Activated CD4-positive, alpha-beta T cell treated with anti-CD3 and anti-CD28 coated beads for 36 hours (primary cell): ENCODE measurements at regions of chr11 and their contacts with region 1.

Region 1: GRCh38 chr11:57800444-57801182 is 39.0 kb downstream of the CTNND1 start:
- DNase-seq: no peak
- ATAC-seq: peak; percentile 91
- H3K4me3 Mint-ChIP-seq: no peak overlapping the region
- H3K27ac Mint-ChIP-seq: peak overlapping the region; percentile 59
- H3K4me1 Mint-ChIP-seq: peaks cover 27% of the 10 kb centered on the region
- H3K27me3 Mint-ChIP-seq: no peaks in the 10 kb centered on the region

Region 2: DNA sequence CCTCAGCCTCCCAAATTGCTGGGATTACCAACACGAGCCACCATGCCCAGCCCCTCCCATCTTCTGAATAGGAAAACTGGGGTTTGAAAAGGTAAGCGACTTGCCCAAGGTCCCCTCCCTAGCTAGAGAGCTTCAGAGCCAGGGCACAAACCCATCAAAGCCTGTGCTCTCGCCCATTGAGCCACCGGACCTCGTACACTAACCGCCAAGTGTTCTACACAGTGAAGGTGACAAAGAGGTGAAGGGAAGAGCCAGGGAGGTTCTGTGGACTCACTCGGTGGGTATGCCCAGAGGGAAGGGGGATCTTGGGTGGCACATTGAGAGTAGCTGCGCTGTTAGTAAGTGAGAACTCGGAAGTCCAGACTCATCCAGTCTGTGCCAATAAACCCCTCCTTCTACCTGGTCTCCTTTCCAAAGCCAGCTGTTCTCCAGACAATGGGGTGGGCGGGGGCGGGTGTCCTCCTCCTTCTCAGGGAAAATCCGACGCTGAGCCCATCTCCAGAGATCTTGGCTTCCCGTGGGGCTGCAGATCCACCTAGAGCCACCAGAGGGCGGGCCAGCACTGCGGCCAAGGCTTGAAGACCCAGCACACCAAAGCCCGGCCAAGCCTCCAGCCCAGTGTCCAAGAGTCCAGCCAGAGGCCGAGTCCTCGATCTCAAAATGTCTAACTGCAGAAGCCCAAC is 343.5 kb before region 1 on chr11:
- CTCF ChIA-PET with region 1: interaction called, 3 read pairs
- POLR2A ChIA-PET with region 1: interaction called, 4 read pairs
- intact Hi-C with region 1: loop called in 1 of 2 experiments (anchors 1 kb)
- DNase-seq: peak; percentile 87
- ATAC-seq: peak; percentile 36
- H3K4me3 Mint-ChIP-seq: peak overlapping the region; percentile 15
- H3K27ac Mint-ChIP-seq: no peak overlapping the region
- H3K4me1 Mint-ChIP-seq: peaks cover 27% of the 10 kb centered on the region
- H3K27me3 Mint-ChIP-seq: peaks cover 25% of the 10 kb centered on the region

Region 3: GRCh38 chr11:57667736-57668435 is 132.7 kb before region 1 on chr11 and contains the start of gene ZDHHC5:
- CTCF ChIA-PET with region 1: interaction called, 9 read pairs
- POLR2A ChIA-PET with region 1: no interaction called
- intact Hi-C with region 1: loop called in 1 of 2 experiments (anchors 2 kb)
- DNase-seq: peak; percentile 100
- ATAC-seq: peak; percentile 88
- H3K4me3 Mint-ChIP-seq: peak within 1 kb of the TSS; percentile 99
- H3K27ac Mint-ChIP-seq: peak within 1 kb of the TSS; percentile 99
- H3K4me1 Mint-ChIP-seq: peaks cover 37% of the 10 kb centered on the region
- H3K27me3 Mint-ChIP-seq: no peaks in the 10 kb centered on the region
- total RNA-seq, gene ZDHHC5: 46.2 to 60.0 TPM

Region 4: GRCh38 chr11:57741132-57742086 is 59.2 kb before region 1 on chr11 and contains the start of gene SELENOH:
- CTCF ChIA-PET with region 1: interaction called, 45 read pairs
- POLR2A ChIA-PET with region 1: interaction called, 15 read pairs
- intact Hi-C with region 1: loop called (anchors 1 kb)
- DNase-seq: peak; percentile 98
- ATAC-seq: peak; percentile 94
- H3K4me3 Mint-ChIP-seq: peak within 1 kb of the TSS; percentile 98
- H3K27ac Mint-ChIP-seq: peak within 1 kb of the TSS; percentile 100
- H3K4me1 Mint-ChIP-seq: peaks cover 28% of the 10 kb centered on the region
- H3K27me3 Mint-ChIP-seq: no peaks in the 10 kb centered on the region
- total RNA-seq, gene SELENOH: 117 to 244 TPM

Region 5: GRCh38 chr11:57761301-57762234 is 39.0 kb before region 1 on chr11 and contains the start of gene CTNND1:
- CTCF ChIA-PET with region 1: interaction called, 40 read pairs
- POLR2A ChIA-PET with region 1: interaction called, 3 read pairs
- intact Hi-C with region 1: no loop called
- DNase-seq: peak; percentile 30
- ATAC-seq: peak; percentile 59
- H3K4me3 Mint-ChIP-seq: peak within 1 kb of the TSS; percentile 69
- H3K27ac Mint-ChIP-seq: peak within 1 kb of the TSS; percentile 32
- H3K4me1 Mint-ChIP-seq: peaks cover 37% of the 10 kb centered on the region
- H3K27me3 Mint-ChIP-seq: no peaks in the 10 kb centered on the region
- total RNA-seq, gene CTNND1: 6.7 to 7.4 TPM

Region 6: DNA sequence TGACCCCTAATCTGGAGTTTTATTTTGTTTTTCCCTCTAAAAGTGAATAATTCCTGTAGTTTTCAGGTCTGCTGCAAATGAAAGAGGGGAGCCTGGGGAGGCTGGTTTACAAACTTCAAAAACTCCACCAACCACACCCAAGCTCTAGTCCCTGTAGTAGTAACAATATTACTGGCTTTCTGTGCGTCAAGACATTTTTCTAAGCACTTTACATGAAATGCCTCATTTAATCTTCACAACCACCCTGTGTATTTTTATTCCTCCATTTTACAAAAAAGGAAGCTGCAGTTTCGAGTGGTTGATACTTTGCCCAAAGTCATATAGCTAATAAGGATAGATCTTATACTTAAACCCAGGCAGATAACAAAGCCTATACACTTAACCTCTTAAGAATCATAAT is 15.5 kb before region 1 on chr11:
- CTCF ChIA-PET with region 1: interaction called, 14 read pairs
- POLR2A ChIA-PET with region 1: no interaction called
- intact Hi-C with region 1: no loop called
- DNase-seq: no peak
- ATAC-seq: no peak
- H3K4me3 Mint-ChIP-seq: no peak overlapping the region
- H3K27ac Mint-ChIP-seq: no peak overlapping the region
- H3K4me1 Mint-ChIP-seq: peaks cover 7% of the 10 kb centered on the region
- H3K27me3 Mint-ChIP-seq: no peaks in the 10 kb centered on the region